HCT116 (cell line): ENCODE measurements at regions of chr1 and their contacts with region 1.

Region 1: GRCh38 chr1:157490467-157491165 is 61.7 kb downstream of the FCRL5 start:
- DNase-seq: peak; percentile 39
- ATAC-seq: peak; percentile 78
- H3K4me3 ChIP-seq: no peak overlapping the region
- H3K27ac ChIP-seq: no peak overlapping the region
- H3K4me1 ChIP-seq: peaks cover 0 to 2% of the 10 kb centered on the region in 2 experiments; a peak in 1 of 4 replicates
- H3K27me3 ChIP-seq: peaks cover 22% of the 10 kb centered on the region
- CTCF ChIP-seq: peak; percentile 71 to 82 (median 75)
- POLR2A ChIP-seq: no peak
- RAD21 ChIP-seq: peak; percentile 67

Region 2: DNA sequence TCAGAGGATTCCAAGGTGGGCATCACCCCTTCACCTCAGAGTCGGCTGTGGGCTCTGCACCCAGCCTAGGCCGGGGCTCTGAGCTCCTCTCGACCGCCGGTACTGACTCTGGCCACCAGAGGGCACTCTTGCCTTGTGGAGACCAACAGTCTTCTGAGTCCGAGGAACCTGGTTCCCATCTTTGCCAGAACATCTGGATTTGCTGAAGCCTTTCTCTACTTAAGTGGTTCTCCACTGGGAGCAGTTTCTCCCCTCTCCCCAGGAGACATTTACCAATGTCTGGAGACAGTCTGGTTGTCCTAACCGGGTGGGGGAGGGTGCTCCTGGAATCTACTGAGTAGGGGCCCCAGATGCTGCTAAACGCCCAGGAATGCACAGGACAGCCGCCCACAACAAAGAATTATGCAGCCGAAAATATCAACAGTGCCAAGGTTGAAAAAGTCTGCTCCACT is 400.4 kb before region 1 on chr1:
- CTCF ChIA-PET with region 1: no interaction called
- POLR2A ChIA-PET with region 1: no interaction called
- RAD21 ChIA-PET with region 1: no interaction called
- intact Hi-C with region 1: loop called (anchors 10 kb)
- DNase-seq: peak; percentile 55
- ATAC-seq: peak; percentile 98
- H3K4me3 ChIP-seq: no peak overlapping the region
- H3K27ac ChIP-seq: no peak overlapping the region
- H3K4me1 ChIP-seq: 0 out of 4 replicates have a peak, but pooled peaks cover 0 to 2% of the 10 kb centered on the region in 2 experiments
- H3K27me3 ChIP-seq: no peaks in the 10 kb centered on the region
- CTCF ChIP-seq: peak; percentile 91 to 98 (median 94)
- POLR2A ChIP-seq: no peak
- RAD21 ChIP-seq: peak; percentile 95

Region 3: GRCh38 chr1:157170677-157171515 is 319.7 kb before region 1 on chr1:
- CTCF ChIA-PET with region 1: no interaction called
- POLR2A ChIA-PET with region 1: no interaction called
- RAD21 ChIA-PET with region 1: no interaction called
- intact Hi-C with region 1: loop called (anchors 2 kb)
- DNase-seq: peak; percentile 64
- ATAC-seq: peak; percentile 69
- H3K4me3 ChIP-seq: no peak overlapping the region
- H3K27ac ChIP-seq: no peak overlapping the region
- H3K4me1 ChIP-seq: peaks cover 0 to 4% of the 10 kb centered on the region in 2 experiments; a peak in 1 of 4 replicates
- H3K27me3 ChIP-seq: peaks cover 2% of the 10 kb centered on the region; the same call in 1 of the 2 replicates
- CTCF ChIP-seq: peak; percentile 64 to 71 (median 71)
- POLR2A ChIP-seq: no peak
- RAD21 ChIP-seq: peak; percentile 25; the same call in 1 of the 2 replicates

Region 4: DNA sequence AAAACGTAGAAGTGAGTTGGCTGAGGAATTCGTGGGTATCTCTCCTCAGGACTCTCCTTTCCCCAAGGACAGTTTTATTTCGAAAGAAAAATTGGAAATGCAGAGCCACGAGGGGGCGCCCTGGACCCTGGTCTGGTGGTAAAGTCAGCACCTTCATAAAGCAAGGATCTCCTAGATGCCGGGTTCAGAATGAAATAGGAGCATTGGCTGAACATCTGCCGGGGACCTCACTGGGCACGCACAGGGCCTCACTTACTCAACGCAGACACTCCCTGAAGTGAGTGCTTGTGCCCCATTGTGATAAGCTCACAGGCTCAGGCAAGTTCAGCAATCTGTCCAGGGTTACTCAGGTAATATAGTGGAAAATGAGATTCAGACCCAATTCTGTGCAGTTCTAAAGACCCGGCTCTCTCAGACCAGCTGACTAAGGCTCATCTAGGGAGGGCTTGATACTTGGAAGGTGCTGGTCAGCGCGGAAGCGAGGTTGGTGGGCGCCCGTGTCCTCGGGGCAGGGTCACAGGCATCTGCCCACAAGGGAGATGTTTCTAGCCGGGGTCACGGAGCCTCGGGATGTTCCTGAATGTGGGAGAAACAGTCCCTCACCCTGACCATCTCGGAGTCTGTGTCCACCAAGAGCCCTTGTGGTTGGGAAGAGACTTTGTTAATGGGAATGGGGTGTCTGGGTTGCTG is 296.8 kb before region 1 on chr1:
- CTCF ChIA-PET with region 1: interaction called, 4 read pairs
- POLR2A ChIA-PET with region 1: no interaction called
- RAD21 ChIA-PET with region 1: no interaction called
- intact Hi-C with region 1: loop called (anchors 1 kb)
- DNase-seq: peak; percentile 57
- ATAC-seq: peak; percentile 75
- H3K4me3 ChIP-seq: no peak overlapping the region
- H3K27ac ChIP-seq: no peak overlapping the region
- H3K4me1 ChIP-seq: peaks cover 0 to 5% of the 10 kb centered on the region in 2 experiments; a peak in 1 of 4 replicates
- H3K27me3 ChIP-seq: no peaks in the 10 kb centered on the region
- CTCF ChIP-seq: peak; percentile 67 to 84 (median 75); a peak in 5 of 6 replicates
- POLR2A ChIP-seq: no peak
- RAD21 ChIP-seq: peak; percentile 62

Region 5: DNA sequence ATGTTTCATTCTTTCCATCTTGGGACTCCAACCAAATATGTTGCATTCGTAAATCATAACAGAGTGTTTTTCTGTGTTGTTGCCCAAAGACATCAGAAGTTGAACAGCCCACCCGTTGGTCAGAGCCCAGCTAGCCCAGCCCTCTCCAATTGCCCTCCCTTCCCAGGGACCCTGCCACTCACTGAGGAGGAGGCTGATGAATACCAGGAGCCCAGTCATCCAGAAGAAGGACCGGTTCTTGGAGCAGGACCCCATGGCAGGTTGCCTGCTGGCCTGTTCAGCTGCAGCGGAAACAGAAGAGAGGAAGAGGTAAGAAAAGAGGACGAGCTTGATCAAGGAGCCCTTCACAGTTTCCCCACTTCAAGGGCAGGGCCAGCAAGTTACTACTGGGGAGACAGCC is 180.2 kb before region 1 on chr1:
- CTCF ChIA-PET with region 1: interaction called, 4 read pairs
- POLR2A ChIA-PET with region 1: no interaction called
- RAD21 ChIA-PET with region 1: no interaction called
- intact Hi-C with region 1: loop called (anchors 2 kb)
- DNase-seq: no peak
- ATAC-seq: no peak
- H3K4me3 ChIP-seq: no peak overlapping the region
- H3K27ac ChIP-seq: no peak overlapping the region
- H3K4me1 ChIP-seq: no peaks in the 10 kb centered on the region
- H3K27me3 ChIP-seq: peaks cover 60% of the 10 kb centered on the region
- CTCF ChIP-seq: no peak
- POLR2A ChIP-seq: no peak
- RAD21 ChIP-seq: no peak

Region 6: GRCh38 chr1:157369808-157370521 is 120.7 kb before region 1 on chr1:
- CTCF ChIA-PET with region 1: interaction called, 16 read pairs
- POLR2A ChIA-PET with region 1: no interaction called
- RAD21 ChIA-PET with region 1: interaction called in 1 of 2 experiments, 8 read pairs
- intact Hi-C with region 1: no loop called
- DNase-seq: peak; percentile 33
- ATAC-seq: peak; percentile 96
- H3K4me3 ChIP-seq: no peak overlapping the region
- H3K27ac ChIP-seq: no peak overlapping the region
- H3K4me1 ChIP-seq: no peaks in the 10 kb centered on the region
- H3K27me3 ChIP-seq: 0 out of 2 replicates have a peak, but pooled peaks cover under 1% of the 10 kb centered on the region
- CTCF ChIP-seq: peak; percentile 73 to 88 (median 83)
- POLR2A ChIP-seq: no peak
- RAD21 ChIP-seq: peak; percentile 75

Region 7: GRCh38 chr1:157380523-157380922 is 110.1 kb before region 1 on chr1:
- CTCF ChIA-PET with region 1: interaction called, 3 read pairs
- POLR2A ChIA-PET with region 1: no interaction called
- RAD21 ChIA-PET with region 1: interaction called in 1 of 2 experiments, 3 read pairs
- intact Hi-C with region 1: loop called (anchors 1 kb)
- DNase-seq: no peak
- ATAC-seq: no peak
- H3K4me3 ChIP-seq: no peak overlapping the region
- H3K27ac ChIP-seq: no peak overlapping the region
- H3K4me1 ChIP-seq: peaks cover 0 to 8% of the 10 kb centered on the region in 2 experiments; a peak in 2 of 4 replicates
- H3K27me3 ChIP-seq: peaks cover 42% of the 10 kb centered on the region
- CTCF ChIP-seq: no peak
- POLR2A ChIP-seq: no peak
- RAD21 ChIP-seq: no peak

Region 8: DNA sequence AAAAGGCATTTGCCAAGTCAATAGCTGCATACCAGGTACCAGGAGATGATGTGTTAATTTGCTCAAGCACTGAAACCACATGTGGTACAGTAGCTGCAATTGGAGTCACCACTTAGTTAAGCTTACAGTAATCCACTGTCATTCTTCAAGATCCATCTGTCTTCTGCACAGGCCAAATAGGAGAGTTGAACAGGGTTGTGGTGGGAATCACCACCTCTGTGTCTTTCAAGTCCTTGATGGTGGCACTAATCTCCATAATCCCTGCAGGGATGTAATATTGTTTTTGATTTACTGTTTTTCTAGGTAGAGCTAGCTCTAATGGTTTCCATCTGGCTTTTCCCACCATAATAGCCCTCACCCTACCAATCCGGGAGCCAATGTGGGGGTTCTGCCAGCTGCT is 30.2 kb before region 1 on chr1:
- CTCF ChIA-PET with region 1: no interaction called
- POLR2A ChIA-PET with region 1: no interaction called
- RAD21 ChIA-PET with region 1: no interaction called
- intact Hi-C with region 1: no loop called
- DNase-seq: no peak
- ATAC-seq: no peak
- H3K4me3 ChIP-seq: no peak overlapping the region
- H3K27ac ChIP-seq: no peak overlapping the region
- H3K4me1 ChIP-seq: no peaks in the 10 kb centered on the region
- H3K27me3 ChIP-seq: 0 out of 2 replicates have a peak, but pooled peaks cover 5% of the 10 kb centered on the region
- CTCF ChIP-seq: no peak
- POLR2A ChIP-seq: no peak
- RAD21 ChIP-seq: no peak